Panc1 (cell line): ENCODE measurements at regions of chr15 and their contacts with region 1.

Region 1: GRCh38 chr15:65020419-65020818 is 9.0 kb downstream of the MTFMT start:
- DNase-seq: no peak
- ATAC-seq: no peak
- H3K4me3 ChIP-seq: no peak overlapping the region
- H3K27ac ChIP-seq: no peak overlapping the region
- H3K4me1 ChIP-seq: no peaks in the 10 kb centered on the region
- H3K27me3 ChIP-seq: no peaks in the 10 kb centered on the region
- CTCF ChIP-seq: no peak

Region 2: DNA sequence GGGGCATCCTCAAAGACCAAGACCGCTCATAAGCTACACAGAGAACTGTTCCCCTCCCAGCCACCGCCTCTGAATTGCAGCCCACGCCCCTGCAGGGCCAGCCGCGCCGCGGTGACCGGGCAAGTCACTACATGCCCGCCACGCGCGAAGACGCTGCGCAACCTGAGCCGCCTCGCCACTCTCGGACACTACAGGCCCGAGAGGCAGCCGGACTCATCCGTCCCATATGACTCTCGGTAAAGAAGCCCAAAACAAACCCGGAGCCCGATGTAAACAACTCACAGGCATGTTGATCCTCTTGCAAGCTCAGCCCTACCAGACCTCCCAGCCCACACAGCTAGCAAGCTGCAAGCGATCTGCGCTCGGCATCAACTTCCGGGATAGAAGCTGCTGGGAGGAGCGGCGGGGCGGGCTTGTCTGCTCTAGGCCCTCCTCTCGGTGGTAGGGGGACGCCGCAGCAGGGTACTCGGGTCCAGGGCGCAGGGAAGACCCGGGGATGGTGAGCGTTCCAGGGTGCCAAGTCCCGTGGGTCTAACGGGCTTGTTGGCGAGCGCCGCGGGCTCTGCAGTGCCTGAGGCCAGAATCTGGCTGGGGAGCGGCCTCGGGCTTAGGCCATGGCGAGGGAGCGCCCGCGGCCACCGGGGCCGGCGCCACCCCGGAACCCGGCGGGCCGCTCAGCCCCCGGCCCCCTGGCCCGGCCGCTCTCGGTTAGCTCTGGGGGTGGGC is 1863.1 kb before region 1 on chr15 and contains the start of gene RPS27L:
- CTCF ChIA-PET with region 1: no interaction called
- POLR2A ChIA-PET with region 1: no interaction called
- in situ Hi-C with region 1: no loop called
- intact Hi-C with region 1: no loop called
- DNase-seq: no peak
- ATAC-seq: peak; percentile 99
- H3K4me3 ChIP-seq: peak within 1 kb of the TSS; percentile 81 to 86
- H3K27ac ChIP-seq: peak within 1 kb of the TSS; percentile 90
- H3K4me1 ChIP-seq: peaks cover 9% of the 10 kb centered on the region; the same call in 1 of the 2 replicates
- H3K27me3 ChIP-seq: no peaks in the 10 kb centered on the region
- CTCF ChIP-seq: no peak
- total RNA-seq, gene RPS27L: 61.3 TPM

Region 3: GRCh38 chr15:65049418-65049840 is 29.0 kb after region 1 on chr15:
- CTCF ChIA-PET with region 1: no interaction called
- POLR2A ChIA-PET with region 1: no interaction called
- in situ Hi-C with region 1: no loop called
- intact Hi-C with region 1: no loop called
- DNase-seq: peak; percentile 65
- ATAC-seq: peak; percentile 98
- H3K4me3 ChIP-seq: peak overlapping the region; percentile 51 to 66
- H3K27ac ChIP-seq: no peak overlapping the region
- H3K4me1 ChIP-seq: peaks cover 7% of the 10 kb centered on the region
- H3K27me3 ChIP-seq: no peaks in the 10 kb centered on the region
- CTCF ChIP-seq: no peak

Region 4: GRCh38 chr15:65343374-65343981 is 323.1 kb after region 1 on chr15:
- CTCF ChIA-PET with region 1: no interaction called
- POLR2A ChIA-PET with region 1: interaction called, 18 read pairs
- in situ Hi-C with region 1: no loop called
- intact Hi-C with region 1: no loop called
- DNase-seq: no peak
- ATAC-seq: no peak
- H3K4me3 ChIP-seq: no peak overlapping the region
- H3K27ac ChIP-seq: no peak overlapping the region
- H3K4me1 ChIP-seq: no peaks in the 10 kb centered on the region
- H3K27me3 ChIP-seq: no peaks in the 10 kb centered on the region
- CTCF ChIP-seq: no peak

Region 5: GRCh38 chr15:66899555-66900350 is 1879.3 kb after region 1 on chr15:
- CTCF ChIA-PET with region 1: no interaction called
- POLR2A ChIA-PET with region 1: no interaction called
- in situ Hi-C with region 1: no loop called
- intact Hi-C with region 1: no loop called
- DNase-seq: no peak
- ATAC-seq: no peak
- H3K4me3 ChIP-seq: no peak overlapping the region
- H3K27ac ChIP-seq: peak overlapping the region; percentile 88
- H3K4me1 ChIP-seq: peaks cover 43% of the 10 kb centered on the region
- H3K27me3 ChIP-seq: no peaks in the 10 kb centered on the region
- CTCF ChIP-seq: no peak